ENCODE measurements at regions of chr22 and their contacts with region 1.

Region 1: DNA sequence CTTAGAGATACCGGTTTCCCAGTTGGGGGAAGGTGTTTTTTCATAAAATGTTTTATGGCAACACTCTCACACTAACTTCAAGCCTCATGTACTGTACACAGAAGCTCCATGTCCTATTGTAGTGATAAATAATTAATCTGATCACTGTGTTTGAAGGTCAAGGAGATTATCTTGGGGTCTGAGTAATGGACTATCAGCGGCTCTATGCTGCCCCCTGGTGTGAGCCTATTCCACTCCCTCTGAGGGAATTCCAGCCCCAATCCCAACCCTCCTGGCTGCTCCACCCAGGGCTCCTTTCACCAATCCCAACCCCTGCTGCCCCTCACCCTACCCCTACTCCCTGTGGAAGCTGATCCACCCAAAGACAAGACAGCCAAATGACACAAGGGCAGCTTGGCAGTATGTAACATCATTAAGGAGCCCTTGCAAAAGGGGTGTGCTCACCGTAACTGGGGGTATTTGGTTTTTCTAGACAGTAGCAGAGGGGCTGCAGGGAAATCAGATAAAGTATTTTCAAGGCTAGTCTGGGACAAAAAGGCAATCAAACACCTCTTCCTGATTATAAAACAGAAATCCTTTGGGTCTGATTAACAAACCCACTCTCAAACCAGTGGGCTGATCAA is 22.3 kb downstream of the HPS4 start:
- DNase-seq: peak; percentile 58
- ATAC-seq: peak; percentile 47

Region 2: DNA sequence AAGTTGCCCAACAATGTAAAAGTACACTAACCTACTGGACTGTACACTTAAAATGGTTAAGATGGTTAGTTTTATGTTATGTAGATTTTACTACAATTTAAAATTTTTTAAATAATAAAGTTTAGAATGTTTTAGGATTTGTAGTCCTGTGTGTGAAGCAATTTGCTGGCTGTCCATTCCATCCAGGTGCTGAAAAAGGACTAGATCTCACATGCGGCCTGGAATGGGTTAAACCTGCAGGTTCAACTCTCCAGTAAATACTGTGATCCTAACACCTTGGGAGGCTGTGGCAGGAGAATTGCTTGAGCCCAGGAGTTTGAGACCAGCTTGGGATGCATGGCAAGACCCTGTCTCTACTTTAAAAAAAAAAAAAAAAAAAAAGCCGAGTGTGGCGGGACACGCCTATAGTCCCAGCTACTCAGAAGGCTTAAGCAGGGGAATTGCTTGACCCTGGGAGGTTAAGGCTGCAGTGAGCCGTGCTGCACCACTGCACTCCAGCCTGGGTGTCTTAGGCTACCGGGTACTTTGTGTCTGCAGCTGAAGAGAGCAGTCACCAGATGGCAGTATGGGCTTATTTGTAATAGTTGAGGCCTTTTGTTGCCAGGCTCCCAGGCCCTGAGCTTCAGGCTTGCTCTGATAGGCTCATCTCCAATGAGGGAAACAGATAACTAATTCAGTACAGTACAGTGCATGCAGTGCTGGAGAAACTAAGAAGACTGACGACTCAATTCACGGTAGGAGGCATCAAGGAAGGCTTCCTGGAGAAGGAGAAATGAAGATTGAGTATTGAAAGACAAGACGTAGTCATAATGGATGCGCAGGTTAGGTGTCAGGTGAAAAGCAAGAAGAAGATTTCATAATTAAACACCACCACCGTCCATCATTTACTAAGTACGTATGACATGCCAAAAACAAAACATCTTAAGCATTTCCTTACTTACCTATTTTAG is 97.0 kb before region 1 on chr22:
- intact Hi-C with region 1: loop called (anchors 2 kb)
- DNase-seq: no peak
- ATAC-seq: peak; percentile 81

Region 3: GRCh38 chr22:26398741-26399153 is 62.6 kb before region 1 on chr22:
- intact Hi-C with region 1: loop called (anchors 2 kb)
- DNase-seq: no peak
- ATAC-seq: no peak